ENCODE measurements at regions of chr19 and their contacts with region 1.

Region 1: GRCh38 chr19:48634424-48635197 is 2.6 kb downstream of the DBP start:
- DNase-seq: no peak
- H3K4me3 ChIP-seq: peak overlapping the region; percentile 42
- CTCF ChIP-seq: no peak

Region 2: GRCh38 chr19:48618916-48619691 is 15.5 kb before region 1 on chr19 and contains the starts of genes RPL18 and SPHK2:
- CTCF ChIA-PET with region 1: interaction called, 3 read pairs
- POLR2A ChIA-PET with region 1: interaction called, 17 read pairs
- DNase-seq: peak; percentile 99
- H3K4me3 ChIP-seq: peak within 1 kb of the TSS; percentile 97
- CTCF ChIP-seq: no peak

Region 3: GRCh38 chr19:48624067-48624594 is 10.5 kb before region 1 on chr19:
- CTCF ChIA-PET with region 1: interaction called, 3 read pairs
- POLR2A ChIA-PET with region 1: interaction called, 17 read pairs
- DNase-seq: peak; percentile 71
- H3K4me3 ChIP-seq: peak overlapping the region; percentile 70
- CTCF ChIP-seq: no peak